ENCODE measurements at regions of chr16 and their contacts with region 1.

Region 1: DNA sequence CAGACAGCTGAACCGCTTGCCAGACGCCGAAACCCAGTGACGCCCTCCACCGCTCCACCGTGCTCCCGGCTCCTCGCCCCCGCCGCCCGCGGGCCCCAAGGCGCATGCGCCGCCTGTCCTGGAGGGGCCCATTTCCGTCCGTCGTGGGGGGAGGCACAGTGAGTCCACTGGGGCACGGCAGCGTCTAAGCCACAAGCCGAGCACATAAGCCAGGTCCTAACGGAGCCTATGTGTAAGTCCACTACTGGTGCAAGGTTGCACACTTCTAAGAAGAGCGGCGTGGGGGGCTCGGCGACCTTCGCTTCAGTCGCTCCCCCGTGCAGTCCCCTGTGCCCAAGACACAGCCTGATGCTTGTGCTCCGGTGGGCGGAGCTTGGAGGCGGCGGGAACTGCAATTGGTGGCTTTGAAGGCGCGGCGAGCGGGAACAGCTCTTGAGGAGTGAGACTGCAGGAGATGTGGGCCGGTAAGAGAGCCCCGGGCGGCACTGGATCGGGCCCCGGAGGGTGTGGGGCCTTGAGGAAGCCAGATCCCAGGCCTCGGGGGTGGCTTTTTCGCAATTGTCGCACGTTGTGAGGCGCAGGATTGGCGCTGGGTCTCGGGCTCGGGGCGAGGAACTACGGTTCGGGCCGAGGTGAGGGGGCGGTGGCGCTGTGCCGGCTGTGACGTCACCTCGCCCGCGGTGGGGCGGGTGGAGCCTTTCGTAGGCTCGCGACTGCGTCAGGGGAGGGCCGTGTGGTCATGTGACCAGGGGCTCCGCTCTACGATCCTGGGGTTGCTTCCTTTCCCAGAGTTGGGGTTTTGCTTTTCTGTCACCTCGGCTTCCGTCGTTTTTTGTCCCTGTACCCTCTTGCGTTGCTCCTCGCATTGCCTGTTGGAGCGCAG is at the starts of genes CENPN and CMC2:
- DNase-seq: peak; percentile 98
- ATAC-seq: peak; percentile 84
- H3K4me3 Mint-ChIP-seq: peak within 1 kb of the TSS; percentile 94
- H3K27ac Mint-ChIP-seq: peak within 1 kb of the TSS; percentile 100
- H3K4me1 Mint-ChIP-seq: peaks cover 42% of the 10 kb centered on the region
- H3K27me3 Mint-ChIP-seq: no peaks in the 10 kb centered on the region
- CTCF ChIP-seq: no peak
- total RNA-seq, gene CENPN: 5.4 and 5.9 TPM in 2 replicates
- total RNA-seq, gene CMC2: 18.1 and 22.3 TPM in 2 replicates

Region 2: GRCh38 chr16:80671281-80671849 is 335.7 kb before region 1 on chr16:
- CTCF ChIA-PET with region 1: no interaction called
- POLR2A ChIA-PET with region 1: no interaction called
- intact Hi-C with region 1: loop called (anchors 5 kb)
- DNase-seq: no peak
- ATAC-seq: peak; percentile 64
- H3K4me3 Mint-ChIP-seq: peak overlapping the region; percentile 67
- H3K27ac Mint-ChIP-seq: peak overlapping the region; percentile 75
- H3K4me1 Mint-ChIP-seq: peaks cover 57% of the 10 kb centered on the region
- H3K27me3 Mint-ChIP-seq: peaks cover 10% of the 10 kb centered on the region
- CTCF ChIP-seq: no peak

Region 3: DNA sequence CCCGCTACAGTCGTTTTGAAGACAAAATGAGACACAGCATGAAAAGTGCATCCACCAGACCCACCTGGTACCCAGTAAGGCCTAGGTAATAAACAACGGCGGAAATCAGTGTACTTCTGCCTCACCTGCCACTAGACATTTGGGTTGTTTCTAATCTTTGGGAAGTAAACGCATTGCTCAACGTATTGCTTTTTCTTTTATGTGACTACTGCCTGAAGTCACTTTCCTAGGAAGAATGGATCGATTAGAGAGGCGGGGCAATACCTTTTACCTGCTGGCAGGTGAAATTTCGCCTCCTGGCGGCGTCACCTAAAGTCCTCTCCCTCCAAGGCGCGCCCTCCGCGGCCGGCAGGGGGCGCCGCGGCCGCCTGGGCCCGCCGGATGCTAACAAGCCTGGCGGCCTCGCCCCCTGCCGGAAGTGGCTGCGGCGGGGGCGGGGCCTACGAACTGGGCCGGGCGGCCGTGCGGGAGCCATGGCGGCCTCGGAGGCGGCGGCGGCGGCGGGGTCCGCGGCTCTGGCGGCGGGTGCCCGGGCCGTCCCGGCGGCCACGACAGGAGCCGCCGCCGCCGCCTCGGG is 28.4 kb after region 1 on chr16 and contains the start of gene ATMIN:
- CTCF ChIA-PET with region 1: interaction called, 51 read pairs
- POLR2A ChIA-PET with region 1: interaction called, 9 read pairs
- intact Hi-C with region 1: loop called (anchors 1 kb)
- DNase-seq: peak; percentile 92
- ATAC-seq: peak; percentile 97
- H3K4me3 Mint-ChIP-seq: peak within 1 kb of the TSS; percentile 79
- H3K27ac Mint-ChIP-seq: peak within 1 kb of the TSS; percentile 30
- H3K4me1 Mint-ChIP-seq: peaks cover 22% of the 10 kb centered on the region
- H3K27me3 Mint-ChIP-seq: no peaks in the 10 kb centered on the region
- CTCF ChIP-seq: peak; percentile 90
- total RNA-seq, gene ATMIN: 30.6 and 31.0 TPM in 2 replicates

Region 4: GRCh38 chr16:81095953-81096717 is 89.1 kb after region 1 on chr16 and contains the start of gene GCSH:
- CTCF ChIA-PET with region 1: no interaction called
- POLR2A ChIA-PET with region 1: no interaction called
- intact Hi-C with region 1: loop called (anchors 1 kb)
- DNase-seq: peak; percentile 97
- ATAC-seq: peak; percentile 97
- H3K4me3 Mint-ChIP-seq: peak within 1 kb of the TSS; percentile 83
- H3K27ac Mint-ChIP-seq: peak within 1 kb of the TSS; percentile 50
- H3K4me1 Mint-ChIP-seq: peaks cover 18% of the 10 kb centered on the region
- H3K27me3 Mint-ChIP-seq: no peaks in the 10 kb centered on the region
- CTCF ChIP-seq: no peak
- total RNA-seq, gene GCSH: 8.4 and 8.8 TPM in 2 replicates

Region 5: DNA sequence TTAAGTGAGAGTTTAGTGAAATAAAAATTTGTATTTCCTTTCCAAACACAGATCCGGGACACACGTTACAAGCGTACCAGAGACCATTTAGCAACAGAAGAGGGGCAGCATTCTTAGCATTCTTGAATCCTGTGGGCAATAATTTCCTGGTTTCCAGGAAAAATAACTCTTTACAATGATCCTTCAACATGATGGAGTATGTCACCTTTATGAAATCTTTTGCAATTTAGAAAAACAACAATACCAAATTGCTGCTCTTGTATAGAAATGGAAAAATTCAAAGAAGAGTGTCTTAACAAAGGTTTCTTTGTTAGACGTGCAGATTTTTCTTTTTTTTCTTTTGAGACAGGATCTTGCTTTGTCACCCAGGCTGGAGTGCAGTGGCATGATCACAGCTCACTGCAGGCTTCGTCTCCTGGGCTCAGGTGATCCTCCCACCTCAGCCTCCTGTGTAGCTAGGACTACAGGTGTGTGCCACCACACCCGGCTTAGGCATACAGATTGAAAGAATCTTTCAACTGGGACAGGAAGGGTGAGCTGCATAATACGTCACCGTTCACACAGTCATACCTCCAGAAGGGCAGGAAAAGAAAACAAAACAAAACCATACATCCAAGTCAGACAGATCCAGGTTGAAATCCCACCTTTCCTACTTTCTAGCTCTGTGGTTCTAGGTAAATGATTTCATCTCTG is 99.9 kb after region 1 on chr16:
- CTCF ChIA-PET with region 1: no interaction called
- POLR2A ChIA-PET with region 1: no interaction called
- intact Hi-C with region 1: no loop called
- DNase-seq: no peak
- ATAC-seq: no peak
- H3K4me3 Mint-ChIP-seq: no peak overlapping the region
- H3K27ac Mint-ChIP-seq: no peak overlapping the region
- H3K4me1 Mint-ChIP-seq: no peaks in the 10 kb centered on the region
- H3K27me3 Mint-ChIP-seq: peaks cover 11% of the 10 kb centered on the region
- CTCF ChIP-seq: no peak

Region 6: DNA sequence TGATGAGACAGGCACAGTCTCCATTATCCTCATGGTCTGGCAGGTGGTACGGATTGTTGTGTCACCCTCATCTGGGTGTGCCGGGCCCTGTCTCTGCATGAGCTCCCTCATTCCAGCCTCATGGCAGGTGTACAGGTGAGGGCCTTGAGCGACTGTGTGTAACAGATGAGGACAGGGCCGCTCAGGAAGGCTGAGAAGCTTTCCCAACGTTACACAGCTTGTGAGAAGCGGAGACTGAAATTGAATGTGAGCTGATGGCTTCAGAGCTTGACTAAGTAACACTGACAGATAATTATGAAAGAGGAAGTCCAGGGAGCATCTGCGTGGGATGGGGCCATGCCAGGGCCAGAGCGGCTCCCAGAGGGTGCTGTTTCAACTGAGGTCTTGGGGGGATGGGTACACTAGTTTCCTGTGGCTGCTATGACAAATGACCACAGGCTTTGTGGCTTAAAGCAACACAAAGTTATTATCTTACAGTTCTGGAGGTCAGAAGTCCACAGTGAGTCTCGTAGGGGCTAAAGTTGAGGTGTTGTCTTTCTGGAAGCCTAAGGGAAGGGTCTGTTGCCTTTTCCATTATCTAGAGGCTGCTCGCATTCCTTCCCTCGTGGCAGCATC is 474.3 kb after region 1 on chr16:
- CTCF ChIA-PET with region 1: no interaction called
- POLR2A ChIA-PET with region 1: no interaction called
- intact Hi-C with region 1: loop called (anchors 2 kb)
- DNase-seq: peak; percentile 58
- ATAC-seq: peak; percentile 84
- H3K4me3 Mint-ChIP-seq: peak overlapping the region; percentile 79
- H3K27ac Mint-ChIP-seq: peak overlapping the region; percentile 93
- H3K4me1 Mint-ChIP-seq: peaks cover 90% of the 10 kb centered on the region
- H3K27me3 Mint-ChIP-seq: no peaks in the 10 kb centered on the region
- CTCF ChIP-seq: no peak

Region 7: GRCh38 chr16:81863630-81864352 is 856.7 kb after region 1 on chr16:
- CTCF ChIA-PET with region 1: no interaction called
- POLR2A ChIA-PET with region 1: no interaction called
- intact Hi-C with region 1: loop called (anchors 10 kb)
- DNase-seq: no peak
- ATAC-seq: peak; percentile 73
- H3K4me3 Mint-ChIP-seq: peak overlapping the region; percentile 71
- H3K27ac Mint-ChIP-seq: peak overlapping the region; percentile 88
- H3K4me1 Mint-ChIP-seq: peaks cover 74% of the 10 kb centered on the region
- H3K27me3 Mint-ChIP-seq: no peaks in the 10 kb centered on the region
- CTCF ChIP-seq: no peak

Region 8: GRCh38 chr16:82594114-82594513 is 1587.1 kb after region 1 on chr16:
- CTCF ChIA-PET with region 1: no interaction called
- POLR2A ChIA-PET with region 1: no interaction called
- intact Hi-C with region 1: no loop called
- DNase-seq: no peak
- ATAC-seq: no peak
- H3K4me3 Mint-ChIP-seq: no peak overlapping the region
- H3K27ac Mint-ChIP-seq: no peak overlapping the region
- H3K4me1 Mint-ChIP-seq: no peaks in the 10 kb centered on the region
- H3K27me3 Mint-ChIP-seq: peaks cover 2% of the 10 kb centered on the region
- CTCF ChIP-seq: no peak

Measured in activated B cell treated with CpG ODN at 0.5 μM for 24 hours (primary cell).